GM18951 (cell line): ENCODE measurements at regions of chr19 and their contacts with region 1.

Region 1: DNA sequence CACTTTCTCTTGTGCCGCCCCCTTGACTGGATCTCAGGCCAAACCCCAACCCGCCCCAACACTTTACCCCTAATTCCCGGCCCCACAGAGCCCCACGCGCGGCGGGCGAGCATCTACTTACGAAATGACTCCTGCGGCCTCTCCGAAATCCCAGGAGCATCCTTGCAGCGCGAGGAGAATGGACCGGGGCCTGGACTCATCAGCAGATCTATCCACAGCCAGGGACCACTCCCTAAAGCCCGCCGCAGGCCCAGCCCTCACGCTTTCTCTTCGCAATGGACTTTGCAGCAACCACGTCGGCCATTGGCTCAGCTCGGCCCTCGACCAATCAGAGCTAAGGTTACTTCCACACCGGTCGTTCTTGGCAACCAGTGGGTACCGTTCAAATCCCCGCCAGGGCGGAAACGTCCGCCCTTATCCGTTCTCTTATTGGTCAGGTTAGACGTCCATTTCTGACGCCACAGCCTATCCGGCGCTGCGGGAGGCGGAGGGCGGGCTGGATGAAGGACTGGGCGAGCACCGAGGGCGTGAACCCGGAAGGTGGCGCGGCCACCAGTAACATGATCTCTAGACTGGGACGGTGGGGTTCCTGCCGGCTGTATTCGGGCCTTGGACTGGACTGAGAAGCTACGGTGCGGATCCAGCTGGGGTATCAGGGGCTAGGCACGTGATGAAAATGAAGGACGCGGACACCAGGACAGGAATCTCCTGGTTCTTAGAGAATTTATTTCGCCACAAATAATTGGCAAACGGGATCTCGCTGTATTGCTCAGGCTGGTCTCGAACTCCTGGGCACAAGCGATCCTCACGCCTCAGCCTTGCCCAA is at the starts of genes CEP89 and FAAP24:
- POLR2A ChIP-seq: peak; percentile 87

Region 2: GRCh38 chr19:33022472-33023116 is 50.7 kb after region 1 on chr19:
- in situ Hi-C with region 1: no loop called
- POLR2A ChIP-seq: no peak

Region 3: DNA sequence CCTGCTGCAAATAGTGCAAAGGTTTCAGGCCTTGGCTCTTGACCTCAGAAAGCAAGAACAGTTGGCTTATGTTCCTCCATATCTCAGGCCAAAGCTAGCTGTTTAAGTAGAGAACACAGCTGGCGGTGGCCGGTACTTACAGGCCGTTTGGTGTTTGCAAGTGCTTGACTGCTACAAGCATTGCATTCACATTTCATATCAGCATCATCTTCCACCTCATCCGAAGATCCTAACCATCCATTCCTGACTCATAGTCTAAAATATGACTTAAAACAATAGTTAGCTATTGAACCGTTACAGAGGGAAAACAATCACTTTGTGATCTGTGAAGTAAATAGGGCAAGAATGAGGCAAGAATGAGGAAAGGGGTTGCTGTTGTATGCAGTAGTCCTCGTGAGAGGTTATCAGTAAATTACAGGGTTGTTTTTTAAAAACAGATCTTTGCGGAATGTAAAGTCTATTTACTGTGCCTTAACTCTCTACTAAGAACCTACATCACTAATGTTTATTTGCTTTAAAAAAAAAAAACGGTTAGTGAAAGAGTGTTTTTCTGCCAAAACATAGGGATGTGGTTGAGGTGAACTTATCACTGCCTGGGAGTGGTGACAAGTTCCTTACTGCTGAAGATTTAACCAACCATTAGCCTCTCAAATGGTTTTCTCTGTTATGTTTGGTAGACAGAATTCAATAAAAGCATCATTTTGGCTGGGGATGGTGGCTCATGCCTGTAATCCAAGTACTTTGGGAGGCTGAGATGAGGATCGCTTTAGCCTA is 138.4 kb after region 1 on chr19:
- in situ Hi-C with region 1: loop called (anchors 10 kb)
- POLR2A ChIP-seq: no peak

Region 4: DNA sequence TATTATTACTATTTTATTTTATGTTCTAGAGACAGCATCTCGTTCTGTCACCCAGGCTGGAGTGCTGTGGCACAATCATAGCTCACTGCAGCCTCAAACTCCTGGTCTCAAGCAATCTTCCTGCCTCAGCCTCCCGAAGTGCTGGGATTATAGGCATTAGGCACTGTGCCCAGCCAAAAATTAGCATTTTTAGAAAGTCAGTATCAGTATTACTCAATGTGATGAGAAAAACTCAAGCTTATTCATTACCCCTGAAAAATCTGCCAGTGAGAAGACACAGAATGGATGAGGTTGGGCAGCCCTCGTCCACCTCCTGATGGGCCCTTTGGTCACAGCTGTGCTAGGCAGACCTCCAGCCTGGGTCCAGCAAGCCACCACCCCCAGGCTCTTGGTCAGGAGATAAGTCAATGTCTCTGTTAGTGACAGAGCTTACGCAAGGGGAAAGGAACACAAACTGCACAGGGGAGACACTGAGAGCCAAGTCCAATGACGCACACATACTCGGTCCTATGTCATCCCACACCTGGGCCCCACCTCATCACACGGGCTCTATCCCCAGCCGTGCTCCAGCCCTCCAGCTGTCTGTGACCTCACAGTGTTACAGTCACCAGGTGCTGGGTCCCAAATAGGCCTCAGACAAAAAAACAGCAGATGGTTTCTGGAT is 529.9 kb after region 1 on chr19:
- in situ Hi-C with region 1: no loop called
- POLR2A ChIP-seq: no peak